Activated CD4-positive, alpha-beta T cell treated with anti-CD3 and anti-CD28 coated beads for 36 hours (primary cell): ENCODE measurements at regions of chr13 and their contacts with region 1.

Region 1: GRCh38 chr13:22993148-22993547 is 187.6 kb upstream of the SGCG start:
- DNase-seq: no peak
- ATAC-seq: no peak
- H3K4me3 Mint-ChIP-seq: no peak overlapping the region
- H3K27ac Mint-ChIP-seq: no peak overlapping the region
- H3K4me1 Mint-ChIP-seq: no peaks in the 10 kb centered on the region
- H3K27me3 Mint-ChIP-seq: peaks cover 3% of the 10 kb centered on the region

Region 2: GRCh38 chr13:23020223-23020843 is 27.2 kb after region 1 on chr13:
- CTCF ChIA-PET with region 1: no interaction called
- POLR2A ChIA-PET with region 1: no interaction called
- intact Hi-C with region 1: loop called in 1 of 2 experiments (anchors 1 kb)
- DNase-seq: peak; percentile 48
- ATAC-seq: peak; percentile 68
- H3K4me3 Mint-ChIP-seq: no peak overlapping the region
- H3K27ac Mint-ChIP-seq: no peak overlapping the region
- H3K4me1 Mint-ChIP-seq: no peaks in the 10 kb centered on the region
- H3K27me3 Mint-ChIP-seq: peaks cover 18% of the 10 kb centered on the region